ENCODE measurements at regions of chr14 and their contacts with region 1.

Region 1: DNA sequence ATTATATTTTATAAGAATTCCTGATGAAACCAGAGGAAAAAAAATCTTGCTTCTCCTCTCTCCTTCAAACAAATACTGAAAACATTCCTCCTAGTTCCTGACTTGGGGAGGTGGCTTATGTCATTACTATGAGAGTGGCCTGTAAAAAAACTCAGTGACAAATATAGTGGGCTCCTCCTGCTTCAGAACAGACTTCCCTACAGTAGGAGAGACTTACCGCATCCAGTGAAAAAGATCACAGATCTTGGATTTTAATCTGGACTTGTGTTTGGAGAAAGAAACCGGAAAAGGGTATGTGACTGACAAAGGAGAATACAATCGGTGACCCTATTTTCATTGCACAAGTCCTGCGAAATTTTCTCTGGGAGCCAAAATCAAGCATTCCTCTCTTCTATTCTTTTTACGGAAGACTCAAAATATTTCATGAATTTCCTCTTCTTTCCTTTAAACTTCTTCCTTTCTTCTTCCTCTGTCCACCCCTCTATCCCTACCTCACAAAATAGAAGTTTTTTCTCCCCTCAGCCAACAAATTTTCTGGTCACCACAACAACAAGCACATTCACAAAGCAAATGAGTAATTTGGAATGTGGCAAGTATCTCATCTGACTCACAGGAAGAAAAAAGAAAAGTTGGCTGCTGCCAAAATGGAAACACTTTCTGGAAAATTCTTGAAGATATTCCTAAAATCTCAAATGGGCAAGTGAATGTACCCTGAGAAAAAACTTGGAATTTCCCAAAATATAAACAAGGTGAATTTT is 185.1 kb upstream of the CDKN3 start:
- DNase-seq: peak; percentile 20 to 70
- H3K4me3 ChIP-seq: no peak overlapping the region
- H3K27ac ChIP-seq: peak overlapping the region; percentile 9
- H3K4me1 ChIP-seq: peaks cover 21% of the 10 kb centered on the region
- H3K27me3 ChIP-seq: no peaks in the 10 kb centered on the region
- CTCF ChIP-seq: no peak

Region 2: DNA sequence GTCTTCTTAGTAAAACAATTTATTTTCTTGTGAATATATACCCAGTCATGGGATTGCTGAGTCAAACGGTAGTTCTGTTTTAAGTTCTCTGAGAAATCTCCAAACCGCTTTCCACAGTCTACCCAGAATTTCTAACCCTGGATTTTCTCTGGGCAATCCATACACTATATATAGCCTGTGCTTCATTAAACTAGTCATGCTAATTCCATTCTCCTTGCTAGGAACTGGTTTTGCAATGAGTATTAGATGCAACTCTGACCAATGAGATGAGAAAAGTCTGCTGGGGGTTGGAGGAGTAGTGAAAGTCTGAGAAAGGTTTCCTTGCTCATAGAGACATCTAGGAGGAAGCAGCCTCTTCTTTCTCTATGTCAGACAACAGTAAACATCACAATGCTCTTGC is 11.0 kb before region 1 on chr14:
- CTCF ChIA-PET with region 1: no interaction called
- POLR2A ChIA-PET with region 1: no interaction called
- intact Hi-C with region 1: no loop called
- DNase-seq: no peak
- H3K4me3 ChIP-seq: no peak overlapping the region
- H3K27ac ChIP-seq: no peak overlapping the region
- H3K4me1 ChIP-seq: no peaks in the 10 kb centered on the region
- H3K27me3 ChIP-seq: no peaks in the 10 kb centered on the region
- CTCF ChIP-seq: no peak

Region 3: GRCh38 chr14:54312140-54312801 is 100.5 kb after region 1 on chr14:
- CTCF ChIA-PET with region 1: no interaction called
- POLR2A ChIA-PET with region 1: no interaction called
- intact Hi-C with region 1: loop called (anchors 5 kb)
- DNase-seq: peak; percentile 91 to 97
- H3K4me3 ChIP-seq: no peak overlapping the region; the same call in 1 of the 2 replicates
- H3K27ac ChIP-seq: peak overlapping the region; percentile 75
- H3K4me1 ChIP-seq: peaks cover 35% of the 10 kb centered on the region
- H3K27me3 ChIP-seq: no peaks in the 10 kb centered on the region
- CTCF ChIP-seq: no peak

Region 4: GRCh38 chr14:54472315-54472714 is 260.6 kb after region 1 on chr14:
- CTCF ChIA-PET with region 1: no interaction called
- POLR2A ChIA-PET with region 1: no interaction called
- intact Hi-C with region 1: no loop called
- DNase-seq: no peak
- H3K4me3 ChIP-seq: no peak overlapping the region
- H3K27ac ChIP-seq: no peak overlapping the region
- H3K4me1 ChIP-seq: no peaks in the 10 kb centered on the region
- H3K27me3 ChIP-seq: no peaks in the 10 kb centered on the region
- CTCF ChIP-seq: no peak

Region 5: GRCh38 chr14:54931101-54931500 is 719.4 kb after region 1 on chr14:
- CTCF ChIA-PET with region 1: no interaction called
- POLR2A ChIA-PET with region 1: interaction called, 12 read pairs
- intact Hi-C with region 1: no loop called
- DNase-seq: no peak
- H3K4me3 ChIP-seq: no peak overlapping the region
- H3K27ac ChIP-seq: no peak overlapping the region
- H3K4me1 ChIP-seq: no peaks in the 10 kb centered on the region
- H3K27me3 ChIP-seq: no peaks in the 10 kb centered on the region
- CTCF ChIP-seq: no peak

Measured in PC-9 (cell line).